K562 (cell line): ENCODE measurements at regions of chr5 and their contacts with region 1.

Region 1: DNA sequence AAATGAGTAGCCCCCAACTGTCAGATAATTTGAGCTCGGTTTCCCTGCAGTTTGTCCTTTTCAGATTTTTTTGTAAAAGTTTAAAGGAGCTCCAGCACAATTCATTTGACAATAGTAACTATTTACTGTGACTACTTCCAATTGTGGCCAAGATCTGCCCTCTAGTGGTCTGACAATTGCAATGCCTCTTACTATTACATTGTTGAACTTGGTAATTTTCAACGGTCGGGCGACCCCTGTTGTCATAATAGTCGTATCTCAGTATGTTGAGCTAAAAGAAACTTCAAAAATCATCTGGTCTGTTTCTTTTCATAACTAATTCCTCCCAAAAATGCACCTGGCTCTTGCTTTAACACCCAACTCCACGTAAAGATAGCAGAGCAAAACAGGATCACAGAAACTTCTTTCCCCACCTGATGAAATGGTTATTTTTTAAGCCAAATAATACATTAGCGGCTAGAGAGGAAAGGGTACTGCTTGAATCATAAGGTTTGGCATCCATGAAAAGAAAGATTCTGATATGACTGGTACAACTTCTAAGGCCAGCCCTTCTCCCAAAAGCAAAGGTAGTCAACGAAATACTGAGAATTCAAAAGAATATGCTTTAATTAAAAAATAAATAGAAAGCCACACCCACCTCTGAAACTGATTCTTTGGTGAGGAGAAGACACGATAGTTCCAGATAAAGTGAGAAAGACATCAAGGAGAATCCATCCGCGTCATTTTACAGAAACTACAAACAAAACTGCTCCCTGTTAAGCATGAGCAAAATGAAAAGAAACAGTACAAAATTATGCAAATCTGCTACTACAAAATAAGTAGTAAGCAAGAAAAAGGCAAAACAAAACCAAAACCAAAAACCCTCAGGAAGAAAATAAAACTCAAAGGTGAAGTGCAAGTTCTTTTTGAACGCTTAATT is 76.9 kb upstream of the HTR4 start:
- DNase-seq: peak; percentile 66 to 90 (median 70)
- ATAC-seq: peak; percentile 89
- H3K4me3 ChIP-seq: no peak overlapping the region
- H3K27ac ChIP-seq: no peak overlapping the region
- H3K4me1 ChIP-seq: peaks cover 0 to 21% of the 10 kb centered on the region in 2 experiments; a peak in 3 of 5 replicates
- H3K27me3 ChIP-seq: peaks cover 0 to 5% of the 10 kb centered on the region in 2 experiments; a peak in 1 of 5 replicates
- CTCF ChIP-seq: peak; percentile 93 to 100 (median 98)
- EP300 ChIP-seq: no peak
- POLR2A ChIP-seq: no peak
- RAD21 ChIP-seq: peak; percentile 97 to 99

Region 2: GRCh38 chr5:147887024-147887627 is 844.1 kb before region 1 on chr5:
- CTCF ChIA-PET with region 1: interaction called, 13 read pairs
- POLR2A ChIA-PET with region 1: no interaction called
- in situ Hi-C with region 1: no loop called
- intact Hi-C with region 1: loop called (anchors 10 kb)
- DNase-seq: peak in 1 of 4 experiments; percentile 19
- ATAC-seq: 0 out of 3 replicates have a peak, but pooled peaks have one; percentile 39
- H3K4me3 ChIP-seq: no peak overlapping the region
- H3K27ac ChIP-seq: no peak overlapping the region
- H3K4me1 ChIP-seq: no peaks in the 10 kb centered on the region
- H3K27me3 ChIP-seq: no peaks in the 10 kb centered on the region
- CTCF ChIP-seq: peak in 1 of 3 experiments; percentile 51; a peak in 3 of 6 replicates
- EP300 ChIP-seq: no peak
- POLR2A ChIP-seq: no peak
- RAD21 ChIP-seq: peak; percentile 48 to 65; a peak in 3 of 4 replicates

Region 3: GRCh38 chr5:148290271-148291195 is 440.7 kb before region 1 on chr5:
- CTCF ChIA-PET with region 1: interaction called, 3 read pairs
- POLR2A ChIA-PET with region 1: no interaction called
- in situ Hi-C with region 1: no loop called
- intact Hi-C with region 1: loop called (anchors 10 kb)
- DNase-seq: peak in 1 of 4 experiments; percentile 9
- ATAC-seq: peak; percentile 69
- H3K4me3 ChIP-seq: no peak overlapping the region
- H3K27ac ChIP-seq: no peak overlapping the region
- H3K4me1 ChIP-seq: no peaks in the 10 kb centered on the region
- H3K27me3 ChIP-seq: no peaks in the 10 kb centered on the region
- CTCF ChIP-seq: peak; percentile 24 to 51 (median 27); a peak in 3 of 6 replicates
- EP300 ChIP-seq: no peak
- POLR2A ChIP-seq: no peak
- RAD21 ChIP-seq: peak; percentile 16 to 75; a peak in 3 of 4 replicates

Region 4: GRCh38 chr5:148963664-148964063 is 232.5 kb after region 1 on chr5:
- CTCF ChIA-PET with region 1: interaction called, 3 read pairs
- POLR2A ChIA-PET with region 1: no interaction called
- in situ Hi-C with region 1: loop called (anchors 10 kb)
- intact Hi-C with region 1: no loop called
- DNase-seq: no peak
- ATAC-seq: no peak
- H3K4me3 ChIP-seq: no peak overlapping the region
- H3K27ac ChIP-seq: no peak overlapping the region
- H3K4me1 ChIP-seq: no peaks in the 10 kb centered on the region
- H3K27me3 ChIP-seq: peaks cover 3 to 6% of the 10 kb centered on the region in 2 experiments; a peak in 4 of 5 replicates
- CTCF ChIP-seq: no peak
- EP300 ChIP-seq: no peak
- POLR2A ChIP-seq: no peak
- RAD21 ChIP-seq: no peak

Region 5: GRCh38 chr5:149114403-149115312 is 383.5 kb after region 1 on chr5:
- CTCF ChIA-PET with region 1: interaction called, 17 read pairs
- POLR2A ChIA-PET with region 1: interaction called, 4 read pairs
- in situ Hi-C with region 1: no loop called
- intact Hi-C with region 1: loop called (anchors 1 kb)
- DNase-seq: peak; percentile 20 to 73 (median 28)
- ATAC-seq: peak; percentile 100
- H3K4me3 ChIP-seq: no peak overlapping the region
- H3K27ac ChIP-seq: no peak overlapping the region
- H3K4me1 ChIP-seq: no peaks in the 10 kb centered on the region
- H3K27me3 ChIP-seq: peaks cover 0 to 5% of the 10 kb centered on the region in 2 experiments; a peak in 1 of 5 replicates
- CTCF ChIP-seq: peak; percentile 78 to 87 (median 80)
- EP300 ChIP-seq: no peak
- POLR2A ChIP-seq: no peak
- RAD21 ChIP-seq: peak; percentile 94 to 95